Activated naive CD4-positive, alpha-beta T cell treated with anti-CD3 and anti-CD28 coated beads for 36 hours (primary cell): ENCODE measurements at regions of chr19 and their contacts with region 1.

Region 1: DNA sequence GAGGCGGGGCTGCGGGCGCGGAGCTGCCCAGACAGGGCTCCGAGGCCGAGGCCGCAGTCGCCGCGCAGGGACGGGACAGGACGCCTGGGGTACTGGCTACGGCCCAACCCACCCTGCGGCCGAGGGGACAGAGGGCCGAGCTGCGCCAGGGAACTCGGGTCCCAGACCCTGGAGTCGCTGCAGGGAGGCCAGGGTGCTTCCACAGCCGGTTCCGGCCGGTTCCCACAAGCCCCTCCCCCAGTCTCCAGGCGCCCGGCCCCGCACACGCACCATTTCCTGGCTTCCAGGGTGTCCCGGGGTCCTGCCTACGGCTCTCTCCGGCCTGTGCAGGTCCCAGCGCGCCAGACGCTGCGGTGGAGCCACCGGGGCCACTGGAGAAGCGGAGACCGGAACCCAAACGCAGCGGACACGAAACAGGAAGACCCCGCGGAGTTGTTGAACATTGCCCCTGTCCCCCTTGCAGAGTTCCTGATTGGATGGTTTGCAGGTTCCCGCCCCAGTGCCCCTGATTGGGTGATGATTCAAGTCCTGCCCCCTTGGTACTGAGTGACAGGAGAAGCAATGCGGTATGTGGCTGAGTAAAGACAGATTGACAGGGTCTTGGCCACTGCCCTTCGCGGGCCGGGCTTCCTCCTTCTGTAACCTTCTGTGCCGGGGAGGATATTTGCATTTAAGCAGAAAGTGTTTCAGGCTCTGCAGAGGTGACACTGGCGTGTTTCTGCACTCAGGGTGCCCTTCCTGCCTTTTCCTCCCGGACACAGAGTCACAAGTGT is at the start of gene ZNF564:
- DNase-seq: peak; percentile 97
- H3K4me3 Mint-ChIP-seq: peak within 1 kb of the TSS; percentile 99
- H3K27ac Mint-ChIP-seq: peak within 1 kb of the TSS; percentile 96
- H3K4me1 Mint-ChIP-seq: peaks cover 37% of the 10 kb centered on the region
- H3K27me3 Mint-ChIP-seq: no peaks in the 10 kb centered on the region
- total RNA-seq, gene ZNF564: 5.6 to 5.7 TPM

Region 2: GRCh38 chr19:12092065-12092867 is 459.0 kb before region 1 on chr19:
- CTCF ChIA-PET with region 1: no interaction called
- intact Hi-C with region 1: loop called (anchors 10 kb)
- DNase-seq: peak; percentile 86
- H3K4me3 Mint-ChIP-seq: peak overlapping the region; percentile 83
- H3K27ac Mint-ChIP-seq: peak overlapping the region; percentile 73
- H3K4me1 Mint-ChIP-seq: peaks cover 6% of the 10 kb centered on the region
- H3K27me3 Mint-ChIP-seq: peaks cover 14% of the 10 kb centered on the region

Region 3: GRCh38 chr19:12294249-12295158 is 256.7 kb before region 1 on chr19 and contains the start of gene ZNF44:
- CTCF ChIA-PET with region 1: no interaction called
- intact Hi-C with region 1: loop called (anchors 1 kb)
- DNase-seq: peak; percentile 99
- H3K4me3 Mint-ChIP-seq: peak within 1 kb of the TSS; percentile 98
- H3K27ac Mint-ChIP-seq: peak within 1 kb of the TSS; percentile 96
- H3K4me1 Mint-ChIP-seq: peaks cover 31% of the 10 kb centered on the region
- H3K27me3 Mint-ChIP-seq: no peaks in the 10 kb centered on the region
- total RNA-seq, gene ZNF44: 5.9 to 6.3 TPM

Region 4: GRCh38 chr19:12484371-12485051 is 66.7 kb before region 1 on chr19 and contains the start of gene ZNF709:
- CTCF ChIA-PET with region 1: no interaction called
- intact Hi-C with region 1: loop called (anchors 2 kb)
- DNase-seq: peak; percentile 90
- H3K4me3 Mint-ChIP-seq: peak within 1 kb of the TSS; percentile 92
- H3K27ac Mint-ChIP-seq: peak within 1 kb of the TSS; percentile 30
- H3K4me1 Mint-ChIP-seq: peaks cover 30% of the 10 kb centered on the region
- H3K27me3 Mint-ChIP-seq: no peaks in the 10 kb centered on the region
- total RNA-seq, gene ZNF709: 1.9 to 2.4 TPM

Region 5: DNA sequence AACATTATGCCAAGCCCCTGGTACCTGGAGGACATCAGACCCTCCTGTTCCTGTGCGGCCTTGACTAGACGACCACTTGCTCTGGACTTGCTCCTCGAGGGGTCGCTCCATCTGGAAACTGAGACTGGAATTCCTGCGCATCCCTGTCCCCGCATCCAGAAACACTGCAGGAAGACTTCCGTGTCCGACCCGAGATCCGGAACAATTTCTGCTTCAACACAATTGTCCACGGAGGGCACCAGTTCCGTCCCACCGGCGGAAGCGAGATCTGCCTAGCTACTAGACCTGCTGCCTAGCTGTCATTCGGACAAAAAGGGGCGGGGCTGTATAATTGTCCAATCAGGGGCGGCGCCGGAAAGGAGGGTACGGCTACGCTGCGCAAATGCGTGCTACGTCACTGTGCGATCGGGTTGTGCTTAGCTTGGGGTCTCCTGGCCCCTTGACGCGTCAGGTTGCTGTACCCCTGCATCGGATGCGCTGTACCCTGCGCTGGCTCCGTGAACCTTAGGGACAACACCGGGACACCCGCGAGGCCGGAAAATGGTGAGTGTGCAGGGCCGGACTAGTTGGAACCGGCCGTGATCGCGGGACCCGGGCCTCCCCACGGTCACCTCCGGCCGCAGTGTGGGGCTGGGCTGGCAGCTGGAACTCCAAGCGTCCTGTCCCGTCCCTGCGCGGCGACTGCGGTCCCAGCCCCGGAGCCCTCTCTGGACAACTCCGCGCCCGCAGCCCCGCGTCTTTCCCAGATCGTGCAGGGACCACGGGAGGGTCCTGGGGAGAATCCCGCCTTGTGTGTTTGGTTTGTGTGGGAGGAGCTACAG is 59.5 kb after region 1 on chr19 and contains the starts of genes ZNF490 and ZNF791:
- CTCF ChIA-PET with region 1: no interaction called
- intact Hi-C with region 1: loop called (anchors 1 kb)
- DNase-seq: peak; percentile 99
- H3K4me3 Mint-ChIP-seq: peak within 1 kb of the TSS; percentile 100
- H3K27ac Mint-ChIP-seq: peak within 1 kb of the TSS; percentile 95
- H3K4me1 Mint-ChIP-seq: peaks cover 43% of the 10 kb centered on the region
- H3K27me3 Mint-ChIP-seq: no peaks in the 10 kb centered on the region
- total RNA-seq, gene ZNF490: 3.9 to 5.0 TPM
- total RNA-seq, gene ZNF791: 11.2 to 11.9 TPM